ENCODE measurements at regions of chr10 and their contacts with region 1.

Region 1: GRCh38 chr10:93680412-93681047 is 21.9 kb downstream of the FRA10AC1 start:
- DNase-seq: no peak
- H3K4me3 Mint-ChIP-seq: no peak overlapping the region
- H3K27ac Mint-ChIP-seq: no peak overlapping the region
- H3K4me1 Mint-ChIP-seq: no peaks in the 10 kb centered on the region
- H3K27me3 Mint-ChIP-seq: no peaks in the 10 kb centered on the region

Region 2: GRCh38 chr10:93554760-93555432 is 125.6 kb before region 1 on chr10:
- CTCF ChIA-PET with region 1: interaction called, 16 read pairs
- POLR2A ChIA-PET with region 1: no interaction called
- DNase-seq: peak; percentile 51
- H3K4me3 Mint-ChIP-seq: no peak overlapping the region
- H3K27ac Mint-ChIP-seq: no peak overlapping the region
- H3K4me1 Mint-ChIP-seq: peaks cover 3% of the 10 kb centered on the region
- H3K27me3 Mint-ChIP-seq: peaks cover 6% of the 10 kb centered on the region

Region 3: DNA sequence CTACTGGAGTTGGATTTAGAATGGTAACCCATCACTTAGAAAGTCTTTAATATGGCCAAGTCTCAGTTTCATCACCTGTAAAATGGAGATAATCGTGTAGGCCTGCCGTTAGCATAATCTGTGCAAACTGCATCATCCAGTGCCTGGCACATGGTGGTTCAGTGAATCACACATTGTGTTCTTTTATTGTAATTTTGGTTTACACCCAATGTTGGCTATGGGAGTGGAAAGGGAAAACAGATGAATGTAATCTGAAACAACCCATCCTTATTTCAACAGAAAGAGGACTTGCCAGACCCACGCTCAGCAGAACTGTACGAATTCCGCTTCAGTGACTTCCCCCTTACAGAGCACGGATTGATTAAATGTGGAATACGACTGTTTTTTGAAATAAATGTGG is 40.7 kb before region 1 on chr10:
- CTCF ChIA-PET with region 1: no interaction called
- POLR2A ChIA-PET with region 1: no interaction called
- DNase-seq: no peak
- H3K4me3 Mint-ChIP-seq: no peak overlapping the region
- H3K27ac Mint-ChIP-seq: no peak overlapping the region
- H3K4me1 Mint-ChIP-seq: no peaks in the 10 kb centered on the region
- H3K27me3 Mint-ChIP-seq: peaks cover 15% of the 10 kb centered on the region

Region 4: DNA sequence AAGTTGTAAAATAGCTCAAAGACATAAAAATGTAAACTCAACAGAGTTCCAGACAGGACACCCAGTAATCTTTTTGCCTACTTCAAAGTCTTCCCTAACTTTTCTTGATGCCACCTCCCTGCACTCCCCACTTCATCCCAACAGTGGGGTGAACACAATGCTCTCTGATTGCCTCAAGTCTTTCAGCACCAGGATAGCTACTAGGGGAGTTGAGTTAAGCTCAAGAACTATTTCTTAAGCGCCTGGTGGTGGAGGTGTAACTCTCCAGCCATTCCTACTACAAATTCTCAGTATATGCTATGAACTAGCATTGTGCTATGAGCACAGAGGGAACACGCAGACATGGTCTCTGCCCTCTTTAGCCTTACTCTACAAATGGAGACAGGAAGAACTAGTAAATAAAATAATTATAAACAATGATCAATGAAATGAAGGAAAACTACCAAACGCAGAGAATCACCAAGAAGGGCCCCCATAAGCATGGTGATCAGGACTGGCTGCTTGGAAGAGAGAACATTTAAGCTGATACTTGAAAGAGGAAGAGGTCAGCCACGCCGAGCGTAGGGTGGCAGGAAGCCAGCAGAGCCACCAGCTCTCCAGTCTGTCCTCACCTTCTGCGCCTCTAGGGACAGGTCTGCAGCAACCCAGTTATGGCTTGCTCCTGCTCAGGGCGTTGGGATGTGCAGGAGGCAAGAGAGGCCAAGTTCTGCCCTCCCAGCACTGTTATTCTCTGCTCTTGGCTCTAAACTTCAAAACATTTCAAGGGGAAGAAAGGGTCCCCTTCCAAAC is 38.6 kb after region 1 on chr10:
- CTCF ChIA-PET with region 1: no interaction called
- POLR2A ChIA-PET with region 1: no interaction called
- DNase-seq: no peak
- H3K4me3 Mint-ChIP-seq: no peak overlapping the region
- H3K27ac Mint-ChIP-seq: no peak overlapping the region
- H3K4me1 Mint-ChIP-seq: peaks cover 4% of the 10 kb centered on the region
- H3K27me3 Mint-ChIP-seq: peaks cover 35% of the 10 kb centered on the region

Measured in activated CD4-positive, alpha-beta memory T cell treated with anti-CD3 and anti-CD28 coated beads, Interleukin-2, amount 10 ng/mL, durations not matched to agents 7 days and 5 days (primary cell).